ENCODE measurements at regions of chr1 and their contacts with region 1.

Region 1: GRCh38 chr1:84433258-84434080 is 35.2 kb downstream of the DNASE2B start:
- ATAC-seq: peak; percentile 81 to 93 (median 88)
- H3K4me3 ChIP-seq: peak overlapping the region; percentile 7 to 28 (median 13)
- H3K27ac ChIP-seq: peak overlapping the region in 1 of 2 donors; percentile 30
- H3K4me1 ChIP-seq: peaks cover 3 to 18% of the 10 kb centered on the region in 2 donors

Region 2: GRCh38 chr1:83931658-83932253 is 501.7 kb before region 1 on chr1:
- in situ Hi-C with region 1: loop called in 2 of 9 experiments (anchors 25 kb)
- ATAC-seq: peak; percentile 51 to 78 (median 67)
- H3K4me3 ChIP-seq: no peak overlapping the region
- H3K27ac ChIP-seq: no peak overlapping the region
- H3K4me1 ChIP-seq: no peaks in the 10 kb centered on the region

Region 3: GRCh38 chr1:84133479-84133878 is 300.0 kb before region 1 on chr1:
- in situ Hi-C with region 1: loop called in 3 of 9 experiments (anchors 10 to 25 kb)
- ATAC-seq: no peak
- H3K4me3 ChIP-seq: no peak overlapping the region
- H3K27ac ChIP-seq: no peak overlapping the region
- H3K4me1 ChIP-seq: no peaks in the 10 kb centered on the region

Region 4: GRCh38 chr1:84143796-84144565 is 289.5 kb before region 1 on chr1 and contains the start of gene PRKACB:
- in situ Hi-C with region 1: loop called in 3 of 9 experiments (anchors 10 to 25 kb)
- ATAC-seq: no peak
- H3K4me3 ChIP-seq: no peak within 1 kb of the TSS
- H3K27ac ChIP-seq: no peak within 1 kb of the TSS
- H3K4me1 ChIP-seq: no peaks in the 10 kb centered on the region
- total RNA-seq, gene PRKACB: 21.7 to 120 (median 51.3) TPM

Region 5: DNA sequence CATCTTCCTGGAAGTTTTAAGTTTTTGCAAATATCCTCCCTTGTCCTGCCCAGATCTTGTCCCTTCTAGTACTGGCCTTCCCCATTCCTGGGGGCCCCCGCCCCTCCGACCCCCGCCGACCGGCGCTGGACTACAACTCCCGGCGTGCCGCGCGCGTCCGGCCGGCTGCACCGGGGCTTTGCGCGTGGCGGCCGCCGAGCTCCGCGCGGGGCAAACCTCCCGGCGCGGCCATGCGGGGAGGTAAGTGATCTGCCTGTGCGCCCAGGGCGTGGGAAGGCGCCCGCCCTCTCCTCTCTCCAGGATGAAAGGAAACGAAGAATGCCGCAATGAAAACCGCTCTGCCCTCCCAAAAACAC is 135.2 kb before region 1 on chr1:
- in situ Hi-C with region 1: loop called in 1 of 9 experiments (anchors 10 kb)
- ATAC-seq: peak; percentile 54 to 87 (median 81)
- H3K4me3 ChIP-seq: peak overlapping the region; percentile 54 to 72 (median 63)
- H3K27ac ChIP-seq: peak overlapping the region in 1 of 2 donors; percentile 38
- H3K4me1 ChIP-seq: peaks cover 30 to 32% of the 10 kb centered on the region in 2 donors

Region 6: DNA sequence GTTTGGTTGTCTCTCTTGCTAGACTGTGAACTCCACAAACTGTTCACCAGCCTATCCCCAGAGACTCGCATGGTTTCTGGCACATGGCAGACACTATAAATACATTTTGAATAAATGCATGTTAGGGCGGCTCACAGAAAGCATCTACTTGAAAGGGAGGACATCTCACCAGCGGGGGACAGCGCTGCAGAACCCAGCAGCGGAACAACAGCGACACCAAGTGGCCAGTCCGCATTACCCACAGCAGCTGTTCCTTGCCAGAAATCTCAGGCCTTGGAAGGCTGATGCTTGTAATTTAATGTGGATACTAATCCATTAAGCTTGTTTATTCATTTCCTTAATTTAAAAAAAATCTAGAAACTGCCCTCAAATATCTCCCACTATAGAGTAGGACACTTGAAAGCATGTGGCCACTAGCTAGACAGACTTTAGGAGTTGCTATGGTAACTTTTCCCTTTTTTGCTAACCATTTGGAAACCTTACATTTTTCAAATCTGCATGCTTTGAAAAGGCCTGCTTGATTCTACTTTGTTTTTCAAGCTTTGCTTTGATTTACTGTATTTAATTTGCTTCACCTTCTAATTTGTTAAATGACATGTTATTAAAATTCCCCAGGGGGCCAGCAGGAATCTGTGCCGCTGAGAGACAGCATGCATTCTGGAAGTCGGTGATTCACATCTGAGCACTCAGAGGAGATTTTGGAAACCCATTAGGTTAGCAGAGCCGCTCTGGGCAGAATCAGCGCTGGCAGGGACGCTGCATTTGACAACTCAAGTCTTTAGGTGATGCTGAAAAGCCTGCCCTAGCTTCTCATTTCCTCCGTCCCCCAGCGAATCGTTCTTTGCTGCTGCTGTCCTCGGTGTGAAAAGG is 320.3 kb after region 1 on chr1:
- in situ Hi-C with region 1: loop called in 1 of 9 experiments (anchors 25 kb)
- ATAC-seq: peak; percentile 88 to 98 (median 96)
- H3K4me3 ChIP-seq: no peak overlapping the region
- H3K27ac ChIP-seq: no peak overlapping the region
- H3K4me1 ChIP-seq: peaks cover 0 to 18% of the 10 kb centered on the region in 2 donors